Prostate gland (tissue), 2 donors: ENCODE measurements at regions of chr7 and their contacts with region 1.

Region 1: GRCh38 chr7:8217200-8218068 is 44.5 kb downstream of the ICA1 start:
- DNase-seq: peak; percentile 68
- H3K4me3 ChIP-seq: no peak overlapping the region
- H3K27ac ChIP-seq: no peak overlapping the region
- H3K4me1 ChIP-seq: no peaks in the 10 kb centered on the region
- H3K27me3 ChIP-seq: no peaks in the 10 kb centered on the region
- CTCF ChIP-seq: peak; percentile 73 to 89 (median 86)
- POLR2A ChIP-seq: no peak

Region 2: GRCh38 chr7:7424151-7424873 is 793.1 kb before region 1 on chr7:
- intact Hi-C with region 1: loop called (anchors 2 kb)
- DNase-seq: peak; percentile 70
- H3K4me3 ChIP-seq: peak overlapping the region; percentile 26 to 29
- H3K27ac ChIP-seq: no peak overlapping the region
- H3K4me1 ChIP-seq: no peaks in the 10 kb centered on the region
- H3K27me3 ChIP-seq: no peaks in the 10 kb centered on the region
- CTCF ChIP-seq: peak; percentile 28 to 84 (median 74)
- POLR2A ChIP-seq: no peak

Region 3: DNA sequence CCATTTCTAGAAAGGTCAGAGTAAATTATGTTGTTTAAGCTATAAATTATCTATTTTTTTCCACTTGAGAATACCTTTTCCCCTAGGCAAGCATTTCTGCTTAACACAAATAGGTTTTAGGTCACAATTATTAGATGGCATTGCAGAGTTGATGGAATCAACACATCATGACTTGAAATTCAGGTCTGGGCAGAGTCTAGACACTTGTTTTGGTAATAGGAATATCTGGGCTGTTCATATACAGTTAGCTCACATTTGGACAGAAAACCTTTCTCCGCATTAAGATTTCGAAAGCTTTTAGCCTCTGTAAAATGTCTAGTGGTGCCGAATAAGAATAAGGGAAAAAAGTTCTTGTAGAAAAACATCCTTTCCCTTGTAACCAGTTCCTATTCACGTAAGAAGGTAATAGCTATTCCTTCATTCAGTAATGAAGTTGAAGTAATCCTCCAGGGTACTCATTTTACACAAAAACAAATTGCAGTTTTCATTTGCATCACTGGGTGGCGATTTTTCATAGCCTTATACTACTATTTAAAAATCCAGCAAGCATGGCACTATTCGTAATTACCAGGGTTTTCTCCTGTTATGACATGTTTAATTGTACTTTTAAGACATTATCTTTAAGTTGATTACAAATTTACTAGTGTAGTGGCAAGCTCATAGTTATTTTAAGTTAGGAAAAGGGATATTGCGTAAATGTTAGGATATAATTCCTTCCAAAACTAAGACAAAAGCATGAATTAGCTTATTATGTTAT is 536.1 kb before region 1 on chr7:
- intact Hi-C with region 1: loop called (anchors 5 kb)
- DNase-seq: peak; percentile 79
- H3K4me3 ChIP-seq: peak overlapping the region in 1 of 2 donors; percentile 7
- H3K27ac ChIP-seq: peak overlapping the region; percentile 64 to 78
- H3K4me1 ChIP-seq: no peaks in the 10 kb centered on the region
- H3K27me3 ChIP-seq: no peaks in the 10 kb centered on the region
- CTCF ChIP-seq: peak; percentile 11 to 84 (median 80)
- POLR2A ChIP-seq: no peak